ENCODE measurements at regions of chr15 and their contacts with region 1.

Region 1: GRCh38 chr15:63466378-63467192 is 37.8 kb upstream of the USP3 start:
- DNase-seq: peak in 1 of 10 donors; percentile 25
- H3K4me3 ChIP-seq: peak overlapping the region in 2 of 59 donors; percentile 10 to 26
- H3K27ac ChIP-seq: peak overlapping the region in 4 of 59 donors; percentile 5 to 54 (median 8)
- H3K27me3 ChIP-seq: no peaks in the 10 kb centered on the region
- CTCF ChIP-seq: peak; percentile 43 to 77 (median 62)

Region 2: DNA sequence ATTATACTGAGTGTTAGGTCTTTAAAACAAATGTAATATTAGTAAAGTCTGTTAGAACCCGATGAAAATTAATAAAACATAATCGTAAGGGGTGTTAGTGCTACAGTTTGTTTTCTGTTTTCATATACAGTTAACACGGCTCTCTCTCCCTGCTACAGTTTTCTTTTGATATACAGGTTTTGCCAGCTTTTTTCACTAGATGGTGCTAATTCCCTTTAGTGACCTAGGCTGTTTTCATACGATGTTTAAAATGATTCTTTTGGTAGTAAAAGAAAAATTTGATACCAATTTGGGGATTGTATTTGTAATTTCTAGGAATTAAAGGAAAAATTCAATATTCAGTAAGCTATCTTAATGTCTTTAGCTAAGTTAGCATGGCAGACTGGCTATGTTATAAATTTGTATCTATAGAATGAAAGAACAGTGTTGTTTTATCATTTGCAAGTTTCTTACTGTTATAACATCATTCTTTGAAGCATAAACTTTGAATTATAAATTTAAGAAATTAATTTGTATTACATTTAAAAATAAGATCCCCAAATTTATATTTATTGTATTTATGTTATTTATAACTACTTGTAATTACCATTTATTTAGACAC is 177.7 kb before region 1 on chr15:
- intact Hi-C with region 1: loop called in 1 of 2 experiments (anchors 10 kb)
- DNase-seq: no peak
- H3K4me3 ChIP-seq: peak overlapping the region in 8 of 59 donors; percentile 2 to 24 (median 10)
- H3K27ac ChIP-seq: peak overlapping the region in 19 of 59 donors; percentile 0 to 78 (median 32)
- H3K27me3 ChIP-seq: no peaks in the 10 kb centered on the region
- CTCF ChIP-seq: peak; percentile 50 to 92 (median 74)

Region 3: DNA sequence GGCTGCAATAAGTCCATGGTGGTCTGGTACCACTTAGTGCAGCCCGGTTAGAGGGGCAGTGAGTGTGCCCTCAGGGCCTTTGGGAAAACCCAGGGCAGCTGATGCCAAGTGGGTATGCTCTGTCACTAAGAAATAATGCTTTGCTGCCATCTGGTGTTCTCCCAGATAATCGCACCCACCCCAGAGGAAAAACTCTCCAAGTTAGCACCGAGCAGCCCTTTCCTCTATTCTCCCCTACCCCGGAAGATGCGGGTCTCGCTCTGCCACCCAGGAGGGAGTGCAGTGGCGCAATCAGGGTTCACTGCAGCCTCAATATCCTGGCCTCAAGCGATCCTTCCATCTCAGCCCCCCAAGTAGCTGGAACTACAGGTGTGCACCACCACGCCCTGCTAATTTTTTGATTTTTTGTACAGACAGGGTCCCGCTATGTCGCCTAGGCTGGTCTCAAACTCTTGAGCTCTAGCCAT is 601.0 kb after region 1 on chr15:
- intact Hi-C with region 1: loop called in 1 of 2 experiments (anchors 5 kb)
- DNase-seq: peak in 6 of 10 donors; percentile 59 to 75 (median 65)
- H3K4me3 ChIP-seq: peak overlapping the region in 2 of 59 donors; percentile 16 to 27
- H3K27ac ChIP-seq: no peak overlapping the region
- H3K27me3 ChIP-seq: no peaks in the 10 kb centered on the region
- CTCF ChIP-seq: peak; percentile 69 to 96 (median 89)

Measured in dorsolateral prefrontal cortex (tissue), 120 donors.